Vagina (tissue), 2 donors: ENCODE measurements at regions of chr20 and their contacts with region 1.

Region 1: DNA sequence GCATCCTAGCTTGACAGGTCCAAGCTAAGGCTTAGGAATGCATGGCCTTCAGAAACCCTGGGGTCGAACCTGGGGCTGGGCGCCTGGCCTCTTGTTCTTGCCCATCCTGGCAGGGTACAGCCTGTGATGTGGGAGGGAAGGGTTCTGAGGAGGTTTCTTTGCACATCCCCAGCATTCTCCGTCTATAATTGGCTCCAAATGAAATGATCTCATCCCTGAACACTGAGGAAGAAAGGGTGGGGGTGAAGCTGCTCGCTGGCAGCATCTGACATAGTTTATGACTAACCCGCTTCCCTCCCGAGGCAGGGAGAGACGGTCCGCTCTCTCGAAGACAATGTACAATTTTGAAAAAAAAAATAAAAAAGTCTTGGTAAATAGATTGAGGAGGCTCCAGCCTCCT is 67.1 kb upstream of the ZNFX1 start:
- DNase-seq: no peak
- H3K4me3 ChIP-seq: no peak overlapping the region
- H3K27ac ChIP-seq: peak overlapping the region; percentile 78
- H3K4me1 ChIP-seq: peaks cover 21% of the 10 kb centered on the region
- H3K27me3 ChIP-seq: no peaks in the 10 kb centered on the region
- CTCF ChIP-seq: no peak
- POLR2A ChIP-seq: no peak

Region 2: DNA sequence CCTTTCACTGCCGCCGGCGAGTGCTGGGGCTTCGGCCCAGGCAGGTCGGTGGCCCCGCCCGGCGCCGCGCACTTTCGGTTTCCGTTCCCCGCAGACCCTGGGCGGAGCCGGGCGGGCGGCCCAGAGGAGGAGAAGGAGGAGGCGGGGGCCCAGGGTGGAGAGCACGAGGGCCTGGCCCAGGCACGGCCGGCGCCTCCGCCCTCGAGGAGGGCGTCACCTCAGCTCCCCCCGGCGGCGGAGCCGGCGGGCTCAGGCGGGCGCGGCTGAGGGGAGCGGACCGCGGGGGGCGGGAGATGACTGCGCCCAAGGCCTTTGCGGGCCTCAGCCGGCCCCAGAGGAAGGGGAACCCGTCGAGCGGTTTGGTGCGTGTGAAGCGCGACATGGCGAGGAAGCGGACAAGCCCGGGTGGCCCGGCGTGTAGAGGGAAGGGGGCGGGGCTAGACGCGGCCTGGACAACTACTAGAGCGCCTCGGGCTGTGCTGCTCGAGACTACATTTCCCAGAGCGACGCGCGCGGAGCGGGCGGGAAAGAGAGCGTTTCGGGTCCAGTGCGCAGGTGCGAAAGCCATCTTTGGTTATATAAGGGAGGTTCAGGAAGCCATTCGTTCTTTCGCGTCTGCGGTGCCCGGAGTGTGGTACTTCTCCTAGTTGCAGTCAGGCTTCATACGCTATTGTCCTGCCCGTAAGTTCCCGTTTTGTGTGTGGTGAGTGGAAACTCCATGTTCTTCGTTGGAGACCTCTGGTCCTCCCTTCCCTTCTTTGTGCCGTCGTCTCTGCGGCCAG is 66.7 kb before region 1 on chr20 and contains the start of gene ZNFX1:
- intact Hi-C with region 1: no loop called
- DNase-seq: peak; percentile 97 to 99
- H3K4me3 ChIP-seq: peak within 1 kb of the TSS; percentile 86 to 95
- H3K27ac ChIP-seq: peak within 1 kb of the TSS; percentile 98
- H3K4me1 ChIP-seq: peaks cover 71% of the 10 kb centered on the region
- H3K27me3 ChIP-seq: no peaks in the 10 kb centered on the region
- CTCF ChIP-seq: no peak
- POLR2A ChIP-seq: peak in 1 of 2 donors; percentile 98
- total RNA-seq, gene ZNFX1: 27.5 TPM

Region 3: GRCh38 chr20:49384437-49385088 is 39.6 kb after region 1 on chr20:
- intact Hi-C with region 1: loop called (anchors 5 kb)
- DNase-seq: no peak
- H3K4me3 ChIP-seq: no peak overlapping the region
- H3K27ac ChIP-seq: no peak overlapping the region
- H3K4me1 ChIP-seq: peaks cover 18% of the 10 kb centered on the region
- H3K27me3 ChIP-seq: no peaks in the 10 kb centered on the region
- CTCF ChIP-seq: peak in 2 of 3 experiments; percentile 38 to 55
- POLR2A ChIP-seq: no peak